Pancreas (tissue), 10 donors: ENCODE measurements at regions of chr22 and their contacts with region 1.

Region 1: DNA sequence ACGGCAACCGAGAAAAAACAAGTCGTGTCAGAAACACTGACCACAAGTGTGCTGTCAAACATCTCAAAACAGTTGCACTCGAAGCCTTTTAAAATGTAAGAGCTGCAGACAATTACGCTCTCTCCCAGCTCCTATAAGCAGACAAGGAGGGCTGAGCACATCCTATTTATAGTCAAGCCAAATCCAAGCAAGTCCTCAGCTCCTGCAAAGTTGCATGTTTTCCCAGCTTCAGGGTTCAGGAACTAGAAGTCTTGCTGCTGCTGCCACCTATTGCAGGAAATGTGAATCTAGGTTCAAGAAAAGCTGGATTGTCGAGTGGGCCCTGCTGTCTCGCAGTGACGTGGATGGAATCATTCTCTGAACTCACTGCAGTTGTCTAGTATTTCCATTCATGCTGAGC is 15.5 kb downstream of the EFCAB6 start:
- DNase-seq: no peak
- ATAC-seq: peak in 1 of 4 donors; percentile 33
- H3K4me3 ChIP-seq: no peak overlapping the region
- H3K27ac ChIP-seq: no peak overlapping the region
- H3K4me1 ChIP-seq: no peaks in the 10 kb centered on the region
- H3K27me3 ChIP-seq: no peaks in the 10 kb centered on the region
- CTCF ChIP-seq: no peak

Region 2: GRCh38 chr22:43636086-43636485 is 160.5 kb before region 1 on chr22:
- intact Hi-C with region 1: loop called in 1 of 3 experiments (anchors 10 kb)
- DNase-seq: no peak
- ATAC-seq: no peak
- H3K4me3 ChIP-seq: no peak overlapping the region
- H3K27ac ChIP-seq: no peak overlapping the region
- H3K4me1 ChIP-seq: no peaks in the 10 kb centered on the region
- H3K27me3 ChIP-seq: no peaks in the 10 kb centered on the region
- CTCF ChIP-seq: no peak